Left ventricle myocardium inferior (tissue), 1 donor: ENCODE measurements at regions of chr4 and their contacts with region 1.

Region 1: DNA sequence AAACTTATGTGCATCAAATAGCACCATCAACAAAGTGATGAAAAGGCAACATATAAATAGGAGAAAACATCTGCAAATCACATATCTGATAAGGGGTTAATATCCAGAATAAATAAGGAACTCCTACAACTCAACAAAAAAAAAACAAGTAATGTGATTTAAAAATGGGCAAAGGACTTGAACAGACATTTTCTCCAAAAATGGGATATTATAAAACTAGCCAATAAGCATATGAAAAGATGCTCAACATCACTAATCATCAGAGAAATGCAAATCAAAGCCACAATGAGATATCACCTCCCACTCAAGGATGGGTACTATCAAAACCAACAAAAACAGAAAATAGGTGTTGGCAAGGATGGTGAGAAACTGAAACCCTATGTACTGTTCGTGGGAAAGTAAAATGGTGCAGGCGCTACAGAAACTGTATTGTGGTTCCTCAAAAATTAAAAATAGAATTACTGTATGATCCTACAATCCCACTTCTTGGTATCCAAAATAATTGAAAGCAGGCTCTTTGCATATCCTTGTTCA is 2.4 kb downstream of the DNAJB14 start:
- DNase-seq: no peak
- H3K4me3 ChIP-seq: no peak overlapping the region
- H3K27ac ChIP-seq: no peak overlapping the region
- H3K4me1 ChIP-seq: peaks cover 67% of the 10 kb centered on the region
- H3K27me3 ChIP-seq: no peaks in the 10 kb centered on the region
- CTCF ChIP-seq: no peak

Region 2: DNA sequence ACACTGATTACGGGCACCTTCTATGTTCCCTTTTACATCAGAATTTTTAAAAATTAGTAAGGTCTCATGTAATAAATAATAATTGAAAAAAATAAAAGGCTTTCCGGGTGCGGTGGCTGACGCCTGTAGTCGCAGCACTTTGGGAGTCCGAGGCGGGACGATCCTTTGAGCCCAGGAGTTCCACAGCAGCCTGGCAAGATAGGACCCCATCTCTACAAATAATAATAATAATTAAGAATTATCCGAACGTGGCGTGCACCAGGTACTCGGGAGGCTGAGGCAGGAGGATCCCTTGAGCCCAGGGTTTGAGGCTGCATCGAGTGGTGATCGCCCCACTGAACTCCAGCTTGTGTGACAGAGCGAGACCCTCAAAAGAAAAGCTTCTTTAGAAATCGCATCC is 49.0 kb before region 1 on chr4:
- intact Hi-C with region 1: loop called (anchors 5 kb)
- DNase-seq: no peak
- H3K4me3 ChIP-seq: peak overlapping the region; percentile 85
- H3K27ac ChIP-seq: peak overlapping the region; percentile 87
- H3K4me1 ChIP-seq: peaks cover 43% of the 10 kb centered on the region
- H3K27me3 ChIP-seq: no peaks in the 10 kb centered on the region
- CTCF ChIP-seq: no peak

Region 3: GRCh38 chr4:100008048-100008447 is 64.1 kb after region 1 on chr4:
- intact Hi-C with region 1: no loop called
- DNase-seq: no peak
- H3K4me3 ChIP-seq: no peak overlapping the region
- H3K27ac ChIP-seq: no peak overlapping the region
- H3K4me1 ChIP-seq: no peaks in the 10 kb centered on the region
- H3K27me3 ChIP-seq: no peaks in the 10 kb centered on the region
- CTCF ChIP-seq: no peak